Dendritic cell treated with granulocyte-macrophage colony-stimulating factor and Interleukin-4, amounts not matched to agents 40 ng/mL and 50 ng/mL, for 4 days (primary cell): ENCODE measurements at regions of chr13 and their contacts with region 1.

Region 1: GRCh38 chr13:108508263-108508662 is 121.1 kb upstream of the MYO16 start:
- H3K4me3 Mint-ChIP-seq: no peak overlapping the region
- H3K27ac Mint-ChIP-seq: no peak overlapping the region
- H3K4me1 Mint-ChIP-seq: no peaks in the 10 kb centered on the region
- H3K27me3 Mint-ChIP-seq: no peaks in the 10 kb centered on the region

Region 2: GRCh38 chr13:108227651-108228272 is 280.5 kb before region 1 on chr13:
- intact Hi-C with region 1: loop called (anchors 5 kb)
- H3K4me3 Mint-ChIP-seq: no peak overlapping the region
- H3K27ac Mint-ChIP-seq: no peak overlapping the region
- H3K4me1 Mint-ChIP-seq: peaks cover 10% of the 10 kb centered on the region
- H3K27me3 Mint-ChIP-seq: no peaks in the 10 kb centered on the region

Region 3: DNA sequence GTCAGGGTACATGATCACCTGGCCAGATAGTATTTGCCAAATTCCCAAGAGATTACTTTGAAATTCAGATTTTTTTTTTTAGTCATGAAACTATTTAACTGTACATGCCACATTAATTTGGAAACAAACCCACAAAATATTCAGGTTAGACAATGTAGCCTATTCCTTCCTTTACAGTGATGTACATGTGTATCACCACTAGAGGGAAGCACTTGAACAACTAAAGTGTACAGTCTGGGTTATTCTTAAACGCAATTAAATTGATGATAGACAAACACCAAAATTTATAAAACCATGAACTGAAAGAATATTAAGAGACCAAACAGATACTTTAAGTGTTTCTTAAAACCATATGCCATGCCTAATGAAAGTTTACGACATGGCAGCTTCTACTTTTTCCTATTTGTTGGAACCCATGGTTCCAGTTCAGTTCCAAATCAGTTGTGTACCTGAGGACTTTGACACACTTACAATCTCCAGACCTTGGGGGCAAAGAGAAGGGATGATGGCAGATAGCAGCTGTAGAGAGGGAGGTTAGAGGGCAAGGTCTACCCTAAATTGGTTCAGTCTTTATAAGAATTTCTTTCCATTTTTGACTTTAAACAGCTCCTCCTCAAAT is 185.9 kb before region 1 on chr13:
- intact Hi-C with region 1: loop called (anchors 5 kb)
- H3K4me3 Mint-ChIP-seq: no peak overlapping the region
- H3K27ac Mint-ChIP-seq: no peak overlapping the region
- H3K4me1 Mint-ChIP-seq: peaks cover 32% of the 10 kb centered on the region
- H3K27me3 Mint-ChIP-seq: no peaks in the 10 kb centered on the region

Region 4: GRCh38 chr13:108342369-108343289 is 165.6 kb before region 1 on chr13:
- intact Hi-C with region 1: loop called (anchors 5 kb)
- H3K4me3 Mint-ChIP-seq: peak overlapping the region; percentile 17
- H3K27ac Mint-ChIP-seq: peak overlapping the region; percentile 63
- H3K4me1 Mint-ChIP-seq: peaks cover 7% of the 10 kb centered on the region
- H3K27me3 Mint-ChIP-seq: no peaks in the 10 kb centered on the region